ENCODE measurements at regions of chr6 and their contacts with region 1.

Region 1: GRCh38 chr6:36423101-36423824 is 19.4 kb downstream of the PXT1 start:
- DNase-seq: peak; percentile 98
- H3K4me3 ChIP-seq: peak overlapping the region; percentile 52 to 75 (median 63)
- H3K27ac ChIP-seq: peak overlapping the region; percentile 54
- H3K4me1 ChIP-seq: peaks cover 12% of the 10 kb centered on the region
- H3K27me3 ChIP-seq: no peaks in the 10 kb centered on the region
- CTCF ChIP-seq: peak; percentile 59 to 74
- POLR2A ChIP-seq: peak; percentile 78

Region 2: GRCh38 chr6:36442671-36443470 is 19.6 kb after region 1 on chr6 and contains the starts of genes KCTD20 and PXT1:
- CTCF ChIA-PET with region 1: interaction called, 18 read pairs
- POLR2A ChIA-PET with region 1: no interaction called
- dilution Hi-C with region 1: no loop called
- intact Hi-C with region 1: loop called (anchors 1 kb)
- DNase-seq: peak; percentile 81
- H3K4me3 ChIP-seq: peak within 1 kb of the TSS; percentile 78 to 96 (median 91)
- H3K27ac ChIP-seq: peak within 1 kb of the TSS; percentile 95
- H3K4me1 ChIP-seq: peaks cover 36% of the 10 kb centered on the region
- H3K27me3 ChIP-seq: no peaks in the 10 kb centered on the region
- CTCF ChIP-seq: no peak
- POLR2A ChIP-seq: peak; percentile 95
- total RNA-seq, gene KCTD20: 47.2 and 49.2 TPM in 2 replicates
- total RNA-seq, gene PXT1: not detected in 2 replicates

Region 3: DNA sequence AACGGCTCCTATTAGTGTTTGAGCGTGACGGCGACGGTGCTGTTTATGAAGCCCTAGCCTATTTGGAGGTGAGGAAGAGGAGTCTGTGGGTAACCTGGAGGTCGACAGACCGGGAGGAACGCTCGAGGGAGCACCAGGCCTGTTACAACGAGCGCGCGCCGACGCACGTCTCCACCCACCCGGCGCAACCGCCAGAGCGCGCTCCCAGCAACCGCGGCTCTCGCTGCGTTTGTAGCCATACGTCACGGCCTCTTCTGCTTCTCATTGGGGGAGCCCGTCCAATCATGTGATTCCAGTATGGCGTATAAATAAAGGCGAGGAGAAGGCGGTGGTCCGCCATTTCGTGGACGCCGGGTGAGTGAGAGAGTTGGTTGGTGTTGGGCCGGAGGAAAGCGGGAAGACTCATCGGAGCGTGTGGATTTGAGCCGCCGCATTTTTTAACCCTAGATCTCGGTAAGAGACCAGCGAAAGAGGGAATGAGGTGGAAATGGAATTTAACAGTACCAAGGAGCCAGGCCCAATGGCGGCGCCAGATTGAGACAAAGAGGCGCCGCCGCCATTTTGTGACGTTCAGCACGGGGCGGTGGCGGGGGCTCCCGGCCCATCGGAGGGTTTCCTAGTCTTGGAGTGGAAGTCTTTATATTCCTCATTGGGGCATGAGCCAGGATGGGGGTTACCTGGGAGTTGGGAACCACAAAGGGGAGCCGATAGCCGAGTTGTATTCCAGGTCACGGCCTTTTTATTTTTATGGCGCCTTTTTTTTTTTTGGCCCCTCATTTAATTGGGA is 171.0 kb after region 1 on chr6 and contains the start of gene SRSF3:
- CTCF ChIA-PET with region 1: interaction called, 4 read pairs
- POLR2A ChIA-PET with region 1: interaction called, 3 read pairs
- dilution Hi-C with region 1: no loop called
- intact Hi-C with region 1: loop called (anchors 1 kb)
- DNase-seq: peak; percentile 97
- H3K4me3 ChIP-seq: peak within 1 kb of the TSS; percentile 76 to 100 (median 100)
- H3K27ac ChIP-seq: peak within 1 kb of the TSS; percentile 97
- H3K4me1 ChIP-seq: peaks cover 25% of the 10 kb centered on the region
- H3K27me3 ChIP-seq: no peaks in the 10 kb centered on the region
- CTCF ChIP-seq: peak; percentile 23 to 61
- POLR2A ChIP-seq: peak; percentile 100
- total RNA-seq, gene SRSF3: 393 and 422 TPM in 2 replicates

Region 4: GRCh38 chr6:36605560-36606391 is 182.5 kb after region 1 on chr6:
- CTCF ChIA-PET with region 1: no interaction called
- POLR2A ChIA-PET with region 1: no interaction called
- dilution Hi-C with region 1: no loop called
- intact Hi-C with region 1: no loop called
- DNase-seq: no peak
- H3K4me3 ChIP-seq: no peak overlapping the region
- H3K27ac ChIP-seq: no peak overlapping the region
- H3K4me1 ChIP-seq: no peaks in the 10 kb centered on the region
- H3K27me3 ChIP-seq: no peaks in the 10 kb centered on the region
- CTCF ChIP-seq: no peak
- POLR2A ChIP-seq: no peak

Region 5: DNA sequence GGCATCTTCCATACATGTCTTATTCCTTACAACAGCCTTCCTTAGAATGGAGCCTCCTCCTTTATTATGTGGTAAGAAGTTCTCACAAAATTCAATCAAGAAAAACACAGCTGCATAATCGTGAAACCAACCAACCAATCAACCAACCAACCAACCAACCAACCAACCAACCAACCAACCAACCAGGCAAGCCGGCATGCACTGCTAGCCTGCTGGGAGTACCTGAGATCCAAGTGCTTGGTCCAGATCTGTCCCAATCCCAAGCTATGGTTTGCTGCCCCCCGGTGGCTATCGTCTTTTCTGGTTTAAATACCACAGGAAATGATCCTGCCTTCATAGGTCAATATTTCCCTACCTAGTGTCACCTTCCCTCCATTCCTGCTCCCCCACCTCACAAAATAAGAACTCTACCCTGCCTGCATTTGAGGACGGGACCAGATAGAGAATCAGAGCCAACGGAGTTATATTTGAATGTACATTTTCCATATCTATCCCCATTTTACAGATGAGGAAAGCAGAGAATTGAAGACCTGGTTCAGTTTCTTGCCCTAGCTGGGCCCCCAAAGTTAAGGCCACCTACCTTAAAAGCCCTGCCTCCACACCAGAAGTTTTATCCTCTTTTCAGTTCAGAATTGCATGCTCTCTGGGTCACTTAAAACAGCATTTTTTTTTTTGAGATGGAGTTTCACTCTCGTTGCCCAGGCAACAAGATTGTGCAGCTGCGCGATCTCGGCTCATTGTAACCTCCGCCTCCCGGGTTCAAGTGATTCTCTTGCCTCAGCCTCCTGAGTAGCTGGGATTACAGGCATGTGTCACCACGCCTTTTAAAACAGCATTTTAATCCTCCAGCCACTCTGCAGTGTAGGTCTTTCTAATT is 301.5 kb after region 1 on chr6:
- CTCF ChIA-PET with region 1: no interaction called
- POLR2A ChIA-PET with region 1: no interaction called
- dilution Hi-C with region 1: no loop called
- intact Hi-C with region 1: loop called (anchors 1 kb)
- DNase-seq: peak; percentile 73
- H3K4me3 ChIP-seq: no peak overlapping the region
- H3K27ac ChIP-seq: no peak overlapping the region
- H3K4me1 ChIP-seq: peaks cover 2% of the 10 kb centered on the region
- H3K27me3 ChIP-seq: no peaks in the 10 kb centered on the region
- CTCF ChIP-seq: peak; percentile 43 to 64
- POLR2A ChIP-seq: no peak

Measured in endothelial cell of umbilical vein (primary cell).